ENCODE measurements at regions of chr12 and their contacts with region 1.

Region 1: GRCh38 chr12:46124848-46125619 is 134.7 kb upstream of the SCAF11 start:
- DNase-seq: peak; percentile 67
- H3K4me3 ChIP-seq: no peak overlapping the region
- H3K27ac ChIP-seq: no peak overlapping the region
- H3K4me1 ChIP-seq: peaks cover 9% of the 10 kb centered on the region
- H3K27me3 ChIP-seq: no peaks in the 10 kb centered on the region
- CTCF ChIP-seq: peak; percentile 51

Region 2: GRCh38 chr12:45730348-45731189 is 394.5 kb before region 1 on chr12:
- intact Hi-C with region 1: no loop called
- DNase-seq: peak; percentile 50
- H3K4me3 ChIP-seq: peak overlapping the region; percentile 78
- H3K27ac ChIP-seq: peak overlapping the region; percentile 99
- H3K4me1 ChIP-seq: peaks cover 6% of the 10 kb centered on the region
- H3K27me3 ChIP-seq: no peaks in the 10 kb centered on the region
- CTCF ChIP-seq: no peak

Region 3: GRCh38 chr12:46071769-46072624 is 53.0 kb before region 1 on chr12:
- intact Hi-C with region 1: no loop called
- DNase-seq: peak; percentile 83
- H3K4me3 ChIP-seq: no peak overlapping the region
- H3K27ac ChIP-seq: no peak overlapping the region
- H3K4me1 ChIP-seq: no peaks in the 10 kb centered on the region
- H3K27me3 ChIP-seq: no peaks in the 10 kb centered on the region
- CTCF ChIP-seq: peak; percentile 91

Region 4: GRCh38 chr12:46303039-46303666 is 178.1 kb after region 1 on chr12:
- intact Hi-C with region 1: loop called (anchors 5 kb)
- DNase-seq: peak; percentile 53
- H3K4me3 ChIP-seq: no peak overlapping the region
- H3K27ac ChIP-seq: no peak overlapping the region
- H3K4me1 ChIP-seq: no peaks in the 10 kb centered on the region
- H3K27me3 ChIP-seq: no peaks in the 10 kb centered on the region
- CTCF ChIP-seq: peak; percentile 69

Region 5: GRCh38 chr12:47882781-47883546 is 1757.9 kb after region 1 on chr12:
- intact Hi-C with region 1: no loop called
- DNase-seq: peak; percentile 75
- H3K4me3 ChIP-seq: no peak overlapping the region
- H3K27ac ChIP-seq: no peak overlapping the region
- H3K4me1 ChIP-seq: peaks cover 11% of the 10 kb centered on the region
- H3K27me3 ChIP-seq: no peaks in the 10 kb centered on the region
- CTCF ChIP-seq: no peak

Measured in colonic mucosa (tissue), 4 donors.